SK-N-SH (cell line): ENCODE measurements at regions of chr17 and their contacts with region 1.

Region 1: GRCh38 chr17:40474419-40475002 is 26.9 kb downstream of the TNS4 start:
- DNase-seq: no peak
- H3K4me3 ChIP-seq: no peak overlapping the region
- H3K27ac ChIP-seq: no peak overlapping the region
- H3K4me1 ChIP-seq: peaks cover 12 to 15% of the 10 kb centered on the region in 2 experiments; a peak in 3 of 4 replicates
- H3K27me3 ChIP-seq: no peaks in the 10 kb centered on the region
- CTCF ChIP-seq: no peak
- EP300 ChIP-seq: no peak
- RAD21 ChIP-seq: no peak

Region 2: GRCh38 chr17:40362696-40363110 is 111.8 kb before region 1 on chr17:
- CTCF ChIA-PET with region 1: interaction called, 18 read pairs
- POLR2A ChIA-PET with region 1: interaction called, 4 read pairs
- DNase-seq: peak; percentile 93
- H3K4me3 ChIP-seq: peak overlapping the region; percentile 57 to 62
- H3K27ac ChIP-seq: no peak overlapping the region
- H3K4me1 ChIP-seq: peaks cover 6 to 16% of the 10 kb centered on the region in 2 experiments; a peak in 2 of 4 replicates
- H3K27me3 ChIP-seq: no peaks in the 10 kb centered on the region
- CTCF ChIP-seq: peak; percentile 72
- EP300 ChIP-seq: no peak
- RAD21 ChIP-seq: peak; percentile 68

Region 3: DNA sequence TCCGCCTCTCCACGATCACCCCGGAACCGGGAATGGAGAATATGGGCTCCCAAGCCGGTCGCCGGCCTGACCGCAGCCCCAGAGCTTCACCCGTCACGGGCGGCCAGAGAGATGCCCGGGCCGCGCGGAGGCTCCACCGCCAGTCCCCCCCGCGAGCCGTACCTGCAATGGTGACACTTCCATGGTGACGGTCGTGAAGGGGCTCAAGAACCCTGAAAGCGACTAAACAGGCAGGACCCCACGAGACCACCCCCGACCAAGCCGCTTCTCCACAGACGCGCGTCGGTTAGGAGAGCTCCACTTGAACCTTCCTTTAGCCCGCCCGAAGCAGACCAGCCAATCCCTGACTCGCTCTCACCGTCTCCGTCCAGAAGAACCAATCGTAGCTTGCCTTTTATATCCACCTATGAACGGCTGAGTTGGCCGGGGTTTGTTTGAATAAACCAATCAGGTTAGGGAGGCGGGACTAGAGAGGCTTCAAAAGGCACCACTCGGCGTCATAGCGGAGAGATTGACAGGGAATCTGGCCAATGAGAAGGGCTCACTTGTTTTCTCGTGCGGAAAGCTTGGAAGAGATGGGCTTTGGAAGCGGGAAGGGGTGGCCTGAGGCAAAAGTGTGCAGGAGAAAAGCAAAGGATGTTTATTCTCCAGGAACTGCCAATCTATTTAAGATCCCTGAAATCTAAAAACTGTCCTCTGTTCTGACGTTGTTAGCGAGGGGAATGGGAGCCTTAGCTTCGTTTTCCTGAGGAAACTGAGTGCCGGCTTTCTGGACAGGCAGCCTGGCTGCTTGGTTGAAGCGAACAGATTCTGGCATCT is 56.7 kb before region 1 on chr17 and contains the start of gene TOP2A:
- CTCF ChIA-PET with region 1: interaction called, 37 read pairs
- POLR2A ChIA-PET with region 1: interaction called, 4 read pairs
- DNase-seq: peak; percentile 97
- H3K4me3 ChIP-seq: peak within 1 kb of the TSS; percentile 64 to 80
- H3K27ac ChIP-seq: peak within 1 kb of the TSS; percentile 50 to 81
- H3K4me1 ChIP-seq: peaks cover 0 to 10% of the 10 kb centered on the region in 2 experiments; a peak in 2 of 4 replicates
- H3K27me3 ChIP-seq: no peaks in the 10 kb centered on the region
- CTCF ChIP-seq: no peak
- EP300 ChIP-seq: no peak
- RAD21 ChIP-seq: no peak
- polyA plus RNA-seq, gene TOP2A: 20.6 and 23.2 TPM in 2 replicates

Region 4: DNA sequence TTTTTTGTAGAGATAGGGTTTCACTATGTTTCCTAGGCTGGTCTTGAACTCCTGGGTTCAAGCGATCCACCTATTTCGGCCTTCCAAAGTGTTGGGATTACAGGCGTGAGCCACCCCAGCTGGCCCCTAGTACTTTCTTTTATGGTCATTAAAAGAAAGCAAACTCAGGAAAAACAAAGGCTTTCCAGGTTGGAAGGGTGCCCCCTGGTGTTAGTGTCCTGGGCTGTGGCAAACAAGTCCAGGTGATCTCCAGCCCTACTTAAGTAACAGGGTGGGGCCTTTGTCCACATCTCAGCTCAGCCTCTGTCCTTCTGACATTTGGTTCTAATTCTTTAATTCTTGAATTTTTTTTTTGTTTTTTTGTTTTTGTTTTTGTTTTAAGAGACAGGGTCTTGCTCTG is 24.3 kb before region 1 on chr17:
- CTCF ChIA-PET with region 1: interaction called, 253 read pairs
- POLR2A ChIA-PET with region 1: interaction called, 3 read pairs
- DNase-seq: no peak
- H3K4me3 ChIP-seq: no peak overlapping the region
- H3K27ac ChIP-seq: peak overlapping the region in 1 of 2 experiments; percentile 71; a peak in 2 of 4 replicates
- H3K4me1 ChIP-seq: peaks cover 26 to 70% of the 10 kb centered on the region in 2 experiments
- H3K27me3 ChIP-seq: no peaks in the 10 kb centered on the region
- CTCF ChIP-seq: peak; percentile 65
- EP300 ChIP-seq: no peak
- RAD21 ChIP-seq: peak; percentile 19; the same call in 1 of the 2 replicates

Region 5: GRCh38 chr17:40499551-40500174 is 25.2 kb after region 1 on chr17:
- CTCF ChIA-PET with region 1: interaction called, 19 read pairs
- POLR2A ChIA-PET with region 1: no interaction called
- DNase-seq: peak; percentile 84
- H3K4me3 ChIP-seq: peak overlapping the region in 1 of 2 experiments; percentile 13; a peak in 1 of 4 replicates
- H3K27ac ChIP-seq: 0 out of 4 replicates have a peak overlapping the region, but pooled peaks of 1 of the 2 experiments have one; percentile 18
- H3K4me1 ChIP-seq: peaks cover 5 to 11% of the 10 kb centered on the region in 2 experiments; a peak in 1 of 4 replicates
- H3K27me3 ChIP-seq: no peaks in the 10 kb centered on the region
- CTCF ChIP-seq: no peak
- EP300 ChIP-seq: no peak
- RAD21 ChIP-seq: no peak

Region 6: DNA sequence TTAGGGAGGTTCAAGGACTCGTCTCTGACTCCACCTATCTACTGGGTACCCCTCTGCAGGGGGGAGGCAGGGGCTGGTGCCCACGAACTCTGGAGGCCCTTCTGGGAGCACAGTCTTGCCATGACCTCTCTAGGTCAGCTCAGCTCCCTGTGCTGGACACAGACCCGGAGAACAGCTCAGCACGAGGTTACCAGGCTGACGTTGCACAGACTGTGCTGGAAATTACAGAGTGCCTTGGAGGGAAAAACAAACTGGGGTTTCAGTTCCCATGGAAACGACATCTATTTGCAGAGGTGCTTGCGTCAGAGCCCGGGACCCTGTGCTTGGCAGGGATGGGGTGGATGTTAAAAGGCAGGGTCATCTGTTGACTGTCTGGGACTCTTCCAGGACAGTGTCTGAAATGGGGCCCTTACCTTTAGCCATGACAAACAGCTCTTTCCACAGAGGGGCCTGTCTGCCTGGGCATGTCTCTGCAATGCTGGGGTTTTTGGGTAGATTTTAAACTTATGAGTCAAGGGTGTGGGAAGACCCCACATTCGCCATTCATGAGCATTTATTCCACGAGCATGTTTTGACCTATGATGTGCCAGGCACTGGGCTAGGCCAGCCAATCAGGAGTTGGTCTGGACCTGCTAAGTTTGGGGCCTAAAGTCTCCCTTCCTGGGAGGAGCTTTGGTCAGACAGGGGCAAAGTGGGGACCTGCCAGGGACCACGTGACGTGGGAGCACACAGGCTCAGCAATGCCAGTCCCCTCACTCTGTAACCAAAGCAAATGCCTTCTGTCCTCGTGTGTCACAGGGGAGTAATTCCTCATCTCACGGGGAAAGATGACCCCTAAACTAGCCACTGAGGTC is 68.3 kb after region 1 on chr17:
- CTCF ChIA-PET with region 1: interaction called, 14 read pairs
- POLR2A ChIA-PET with region 1: interaction called, 5 read pairs
- DNase-seq: peak; percentile 88
- H3K4me3 ChIP-seq: no peak overlapping the region
- H3K27ac ChIP-seq: peak overlapping the region; percentile 63 to 96
- H3K4me1 ChIP-seq: peaks cover 8 to 79% of the 10 kb centered on the region in 2 experiments; a peak in 3 of 4 replicates
- H3K27me3 ChIP-seq: no peaks in the 10 kb centered on the region
- CTCF ChIP-seq: no peak
- EP300 ChIP-seq: peak in 1 of 2 experiments; percentile 91; a peak in 2 of 4 replicates
- RAD21 ChIP-seq: no peak

Region 7: DNA sequence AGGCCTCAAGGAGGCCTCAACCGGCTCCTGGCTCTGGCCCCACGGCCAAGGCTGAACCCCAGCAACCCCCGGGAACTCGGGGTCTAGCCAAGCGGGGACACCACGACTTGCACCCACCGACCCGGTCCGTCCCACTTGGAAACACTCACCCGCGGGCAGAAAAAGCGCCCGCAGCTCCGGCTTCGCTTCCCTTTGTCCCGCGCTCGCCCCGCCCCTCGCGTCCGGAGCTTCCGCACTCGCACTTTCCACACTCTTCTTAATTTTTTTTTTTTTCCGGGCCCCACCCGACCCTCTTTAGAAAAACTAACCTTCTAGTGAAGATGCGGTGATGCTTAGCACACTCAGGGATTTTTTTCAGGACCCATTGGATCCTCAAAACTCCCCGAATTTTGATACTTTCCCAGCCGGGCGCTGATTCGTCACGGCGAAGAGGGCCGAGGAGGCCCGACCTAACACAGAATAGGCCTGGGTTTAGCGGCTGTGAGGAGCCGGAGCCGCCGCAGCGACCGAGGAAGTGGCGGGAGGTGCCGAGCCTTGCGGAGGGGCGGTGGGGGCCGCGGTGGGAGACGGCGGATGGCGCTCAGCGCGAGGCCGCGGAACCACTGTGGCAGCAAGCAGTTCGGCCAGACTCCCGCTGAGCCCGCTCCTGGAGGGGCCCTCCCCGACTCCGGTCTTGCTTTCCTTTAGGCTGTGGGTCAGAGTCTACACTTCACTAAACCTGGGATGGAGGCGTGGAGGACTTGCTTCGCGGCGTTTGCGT is 173.3 kb after region 1 on chr17 and contains the start of gene SMARCE1:
- CTCF ChIA-PET with region 1: no interaction called
- POLR2A ChIA-PET with region 1: no interaction called
- DNase-seq: peak; percentile 88
- H3K4me3 ChIP-seq: peak within 1 kb of the TSS; percentile 79 to 97
- H3K27ac ChIP-seq: peak within 1 kb of the TSS; percentile 92 to 95
- H3K4me1 ChIP-seq: peaks cover 19 to 21% of the 10 kb centered on the region in 2 experiments; a peak in 3 of 4 replicates
- H3K27me3 ChIP-seq: no peaks in the 10 kb centered on the region
- CTCF ChIP-seq: no peak
- EP300 ChIP-seq: peak; percentile 76 to 95; a peak in 3 of 4 replicates
- RAD21 ChIP-seq: no peak
- polyA plus RNA-seq, gene SMARCE1: 45.9 and 54.2 TPM in 2 replicates